Activated naive CD4-positive, alpha-beta T cell treated with anti-CD3 and anti-CD28 coated beads for 36 hours (primary cell): ENCODE measurements at regions of chr6 and their contacts with region 1.

Region 1: GRCh38 chr6:132483779-132484679 is 28.9 kb downstream of the STX7 start:
- DNase-seq: peak; percentile 65
- H3K4me3 Mint-ChIP-seq: no peak overlapping the region
- H3K27ac Mint-ChIP-seq: no peak overlapping the region
- H3K4me1 Mint-ChIP-seq: peaks cover 24% of the 10 kb centered on the region
- H3K27me3 Mint-ChIP-seq: no peaks in the 10 kb centered on the region

Region 2: GRCh38 chr6:131923356-131923755 is 560.7 kb before region 1 on chr6:
- CTCF ChIA-PET with region 1: no interaction called
- intact Hi-C with region 1: loop called (anchors 2 kb)
- DNase-seq: peak; percentile 73
- H3K4me3 Mint-ChIP-seq: no peak overlapping the region
- H3K27ac Mint-ChIP-seq: no peak overlapping the region
- H3K4me1 Mint-ChIP-seq: no peaks in the 10 kb centered on the region
- H3K27me3 Mint-ChIP-seq: peaks cover 18% of the 10 kb centered on the region

Region 3: GRCh38 chr6:132190097-132190814 is 293.8 kb before region 1 on chr6:
- CTCF ChIA-PET with region 1: no interaction called
- intact Hi-C with region 1: no loop called
- DNase-seq: no peak
- H3K4me3 Mint-ChIP-seq: no peak overlapping the region
- H3K27ac Mint-ChIP-seq: no peak overlapping the region
- H3K4me1 Mint-ChIP-seq: no peaks in the 10 kb centered on the region
- H3K27me3 Mint-ChIP-seq: no peaks in the 10 kb centered on the region

Region 4: DNA sequence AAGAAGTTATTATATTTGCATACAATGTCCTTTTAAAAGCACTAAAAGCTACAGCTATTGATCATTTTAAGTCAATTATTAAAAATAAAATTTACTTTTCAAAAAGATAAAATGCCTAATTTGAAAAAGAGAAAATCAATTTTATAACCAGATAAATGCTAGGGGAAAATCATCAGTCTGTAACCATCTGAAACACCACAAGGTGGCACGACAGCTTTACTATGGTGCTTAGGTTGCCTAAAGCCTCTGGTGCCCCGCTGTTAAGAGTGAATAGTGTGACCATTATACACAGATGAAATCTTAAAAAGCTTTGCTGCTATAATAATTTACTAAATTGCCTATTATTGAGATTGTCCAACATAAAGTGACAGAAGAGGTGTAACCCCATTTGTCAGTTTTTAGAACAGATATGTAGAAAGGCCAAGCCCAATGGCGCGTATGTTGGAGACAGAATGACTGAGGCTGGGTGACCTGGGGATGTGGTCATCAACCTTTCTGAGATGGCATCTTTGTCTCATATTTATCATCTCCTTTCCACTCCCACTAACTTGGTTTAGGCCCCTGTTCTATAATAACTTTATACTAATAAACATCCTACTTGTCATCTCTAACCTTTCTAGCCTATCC is 183.6 kb before region 1 on chr6:
- CTCF ChIA-PET with region 1: interaction called, 94 read pairs
- intact Hi-C with region 1: loop called (anchors 1 kb)
- DNase-seq: peak; percentile 43
- H3K4me3 Mint-ChIP-seq: no peak overlapping the region
- H3K27ac Mint-ChIP-seq: no peak overlapping the region
- H3K4me1 Mint-ChIP-seq: no peaks in the 10 kb centered on the region
- H3K27me3 Mint-ChIP-seq: peaks cover 26% of the 10 kb centered on the region

Region 5: DNA sequence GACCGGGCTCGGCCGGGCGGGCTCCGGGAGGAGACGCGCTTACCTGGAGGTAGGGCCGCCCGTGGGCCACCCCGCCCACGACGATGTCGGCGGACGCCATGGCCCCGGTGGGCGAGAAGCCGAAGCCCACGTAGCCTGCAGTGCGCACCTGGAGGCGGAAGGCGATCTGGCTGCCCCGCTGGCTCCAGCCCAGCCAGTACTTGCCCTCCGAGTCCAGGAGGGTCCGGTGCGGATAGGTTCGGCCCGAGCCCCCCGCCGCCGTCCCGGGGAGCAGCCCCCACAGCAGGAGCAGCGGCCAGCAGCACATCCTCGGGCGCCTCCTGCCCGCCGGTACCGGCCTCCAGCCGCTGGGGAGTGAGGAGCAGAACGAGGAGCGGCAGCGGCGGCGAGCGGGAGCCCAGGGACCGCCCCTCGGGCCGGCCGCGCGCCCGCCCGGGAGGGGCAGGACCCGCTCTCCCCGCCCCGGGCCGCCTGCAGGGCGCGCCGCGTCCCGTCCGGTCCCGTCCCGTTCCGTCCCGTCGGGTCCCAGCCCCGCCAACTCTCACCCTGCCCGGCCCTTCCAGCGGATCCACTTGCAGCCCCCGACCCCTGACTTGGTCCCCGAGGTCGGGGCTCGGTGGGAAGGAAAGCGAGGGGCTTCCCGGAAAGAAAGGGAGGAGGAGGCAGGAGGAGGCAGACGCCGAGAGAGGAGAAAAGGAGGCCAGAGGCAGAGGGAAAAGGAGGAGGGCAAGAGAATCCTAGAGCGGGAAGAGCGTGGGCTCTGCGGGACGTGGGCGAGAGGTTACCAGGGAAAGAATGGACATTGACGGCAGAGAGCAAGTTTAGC is 82.7 kb before region 1 on chr6 and contains the start of gene MOXD1:
- CTCF ChIA-PET with region 1: interaction called, 5 read pairs
- intact Hi-C with region 1: loop called (anchors 5 kb)
- DNase-seq: peak; percentile 5
- H3K4me3 Mint-ChIP-seq: peak within 1 kb of the TSS; percentile 41
- H3K27ac Mint-ChIP-seq: no peak within 1 kb of the TSS
- H3K4me1 Mint-ChIP-seq: peaks cover 18% of the 10 kb centered on the region
- H3K27me3 Mint-ChIP-seq: peaks cover 54% of the 10 kb centered on the region
- total RNA-seq, gene MOXD1: not detected

Region 6: GRCh38 chr6:132495604-132496079 is 11.6 kb after region 1 on chr6:
- CTCF ChIA-PET with region 1: interaction called, 17 read pairs
- intact Hi-C with region 1: loop called (anchors 1 kb)
- DNase-seq: no peak
- H3K4me3 Mint-ChIP-seq: no peak overlapping the region
- H3K27ac Mint-ChIP-seq: no peak overlapping the region
- H3K4me1 Mint-ChIP-seq: peaks cover 44% of the 10 kb centered on the region
- H3K27me3 Mint-ChIP-seq: no peaks in the 10 kb centered on the region

Region 7: DNA sequence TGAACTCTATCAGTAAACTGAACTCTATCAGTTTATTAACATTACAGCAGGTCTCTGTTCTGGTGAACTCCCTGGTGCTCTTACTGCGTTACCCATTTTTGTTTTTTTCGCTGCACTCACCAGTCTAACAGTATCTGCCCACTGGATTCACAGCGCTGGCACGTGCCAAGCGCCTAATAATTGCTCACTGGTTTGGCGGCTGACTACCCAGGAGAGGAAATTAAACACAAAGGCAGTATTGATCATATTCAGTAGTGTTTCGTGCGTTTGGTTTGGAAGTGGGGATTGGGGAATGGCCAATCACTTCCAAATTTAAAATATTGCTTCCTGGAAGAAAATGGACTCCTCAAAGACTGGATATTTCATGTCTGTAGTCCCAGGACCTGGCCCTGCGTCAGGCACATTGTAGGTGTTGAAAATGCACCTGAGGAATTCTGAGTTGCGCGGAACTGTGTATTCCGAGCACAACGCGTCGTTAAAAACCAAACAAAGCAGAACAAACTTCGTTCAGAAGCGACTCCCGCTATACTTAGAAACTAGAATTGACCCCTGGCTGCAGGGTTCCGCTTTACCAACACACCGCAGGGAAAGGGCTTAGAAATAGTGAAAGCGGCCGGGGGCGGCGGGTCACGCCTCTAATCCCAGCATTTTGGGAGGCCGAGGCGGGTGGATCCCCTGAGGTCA is 329.3 kb after region 1 on chr6:
- CTCF ChIA-PET with region 1: no interaction called
- intact Hi-C with region 1: no loop called
- DNase-seq: peak; percentile 51
- H3K4me3 Mint-ChIP-seq: peak overlapping the region; percentile 94
- H3K27ac Mint-ChIP-seq: peak overlapping the region; percentile 97
- H3K4me1 Mint-ChIP-seq: peaks cover 27% of the 10 kb centered on the region
- H3K27me3 Mint-ChIP-seq: no peaks in the 10 kb centered on the region